CD8-positive, alpha-beta T cell (primary cell): ENCODE measurements at regions of chr10 and their contacts with region 1.

Region 1: DNA sequence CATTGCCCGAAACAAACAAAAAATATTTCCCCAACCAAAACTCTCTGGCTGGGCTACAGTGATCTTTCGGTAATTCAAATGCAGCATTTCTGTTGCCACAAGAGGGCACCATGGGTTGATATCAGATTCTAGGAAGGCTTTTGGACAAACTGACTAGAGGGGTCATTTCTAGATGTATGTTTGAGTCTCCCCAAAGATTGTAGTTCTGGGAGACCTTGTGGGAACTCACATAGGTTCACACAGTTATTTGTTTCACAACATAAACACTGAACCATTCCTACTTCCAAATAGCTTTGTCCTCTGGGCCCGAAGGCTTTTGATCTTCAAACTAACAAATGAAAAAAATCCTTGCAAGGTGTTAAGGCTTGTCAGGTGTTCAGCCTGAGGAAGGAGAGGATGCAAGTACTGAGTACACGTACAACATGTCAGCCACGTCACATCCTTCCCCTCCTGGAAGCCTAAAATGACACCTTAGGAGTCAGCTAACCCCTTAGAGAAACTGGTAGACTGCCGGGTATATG is 37.0 kb upstream of the IL15RA start:
- DNase-seq: peak; percentile 28 to 88 (median 73)
- ATAC-seq: peak; percentile 99
- H3K4me3 ChIP-seq: no peak overlapping the region
- H3K4me3 Mint-ChIP-seq: peak overlapping the region; percentile 17
- H3K27ac ChIP-seq: peak overlapping the region; percentile 23 to 76
- H3K27ac Mint-ChIP-seq: peak overlapping the region; percentile 96
- H3K4me1 ChIP-seq: peaks cover 13% of the 10 kb centered on the region
- H3K4me1 Mint-ChIP-seq: peaks cover 14% of the 10 kb centered on the region
- H3K27me3 ChIP-seq: no peaks in the 10 kb centered on the region
- H3K27me3 Mint-ChIP-seq: no peaks in the 10 kb centered on the region
- CTCF ChIP-seq: peak; percentile 84

Region 2: DNA sequence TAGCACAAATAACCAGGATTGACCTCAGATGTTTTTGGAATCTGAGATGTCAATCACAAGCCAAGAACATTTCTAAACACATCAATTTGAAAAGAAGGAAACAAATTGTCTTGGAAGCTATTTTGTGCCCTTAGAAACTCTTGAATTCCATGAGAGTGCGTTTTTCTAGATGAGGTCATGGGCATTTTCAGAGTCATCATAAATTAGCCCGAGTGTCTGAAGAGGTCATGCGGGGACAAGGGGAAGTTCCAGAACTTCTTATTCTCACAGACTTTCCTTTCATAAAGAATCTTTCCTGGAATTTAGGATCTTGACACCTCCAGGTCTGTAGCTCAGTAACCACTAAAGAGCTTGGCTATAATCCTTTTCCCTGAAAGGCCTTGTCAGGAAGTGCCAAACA is 19.7 kb after region 1 on chr10:
- CTCF ChIA-PET with region 1: interaction called, 12 read pairs
- POLR2A ChIA-PET with region 1: interaction called, 8 read pairs
- intact Hi-C with region 1: no loop called
- DNase-seq: no peak
- ATAC-seq: no peak
- H3K4me3 ChIP-seq: no peak overlapping the region
- H3K4me3 Mint-ChIP-seq: no peak overlapping the region
- H3K27ac ChIP-seq: no peak overlapping the region
- H3K27ac Mint-ChIP-seq: no peak overlapping the region
- H3K4me1 ChIP-seq: peaks cover 26% of the 10 kb centered on the region
- H3K4me1 Mint-ChIP-seq: peaks cover 27% of the 10 kb centered on the region
- H3K27me3 ChIP-seq: no peaks in the 10 kb centered on the region
- H3K27me3 Mint-ChIP-seq: no peaks in the 10 kb centered on the region
- CTCF ChIP-seq: no peak

Region 3: GRCh38 chr10:6050801-6051445 is 36.6 kb after region 1 on chr10:
- CTCF ChIA-PET with region 1: interaction called, 78 read pairs
- POLR2A ChIA-PET with region 1: interaction called, 10 read pairs
- intact Hi-C with region 1: loop called (anchors 1 kb)
- DNase-seq: peak; percentile 68 to 99 (median 86)
- ATAC-seq: peak; percentile 79
- H3K4me3 ChIP-seq: peak overlapping the region; percentile 57 to 69
- H3K4me3 Mint-ChIP-seq: peak overlapping the region; percentile 88
- H3K27ac ChIP-seq: peak overlapping the region; percentile 52 to 79
- H3K27ac Mint-ChIP-seq: peak overlapping the region; percentile 96
- H3K4me1 ChIP-seq: peaks cover 44% of the 10 kb centered on the region
- H3K4me1 Mint-ChIP-seq: peaks cover 75% of the 10 kb centered on the region
- H3K27me3 ChIP-seq: no peaks in the 10 kb centered on the region
- H3K27me3 Mint-ChIP-seq: no peaks in the 10 kb centered on the region
- CTCF ChIP-seq: peak; percentile 18

Region 4: DNA sequence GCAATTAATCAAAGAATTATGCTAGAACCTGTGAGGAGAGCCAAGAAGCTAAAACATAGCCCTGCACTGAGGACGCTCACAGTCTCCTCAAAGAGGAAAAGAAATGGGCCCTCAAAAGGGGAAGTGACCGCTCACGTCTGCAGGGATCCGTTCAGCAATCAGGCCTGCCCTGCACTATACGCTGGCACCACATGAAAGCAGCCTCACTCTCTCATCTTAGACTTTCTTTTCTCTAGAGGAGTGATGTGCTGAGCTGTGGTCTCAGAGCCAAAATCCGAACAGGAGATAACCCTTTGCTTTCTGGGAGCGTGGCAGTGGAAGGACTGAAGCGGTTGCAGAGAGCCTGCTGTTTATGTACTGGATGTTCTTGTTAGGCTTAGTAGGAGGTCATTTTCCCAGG is 54.1 kb after region 1 on chr10:
- CTCF ChIA-PET with region 1: interaction called, 14 read pairs
- POLR2A ChIA-PET with region 1: interaction called, 3 read pairs
- intact Hi-C with region 1: loop called in 1 of 2 experiments (anchors 1 kb)
- DNase-seq: peak in 5 of 9 experiments; percentile 30 to 72 (median 50)
- ATAC-seq: peak; percentile 81
- H3K4me3 ChIP-seq: peak overlapping the region in 1 of 2 experiments; percentile 23
- H3K4me3 Mint-ChIP-seq: peak overlapping the region; percentile 80
- H3K27ac ChIP-seq: no peak overlapping the region
- H3K27ac Mint-ChIP-seq: peak overlapping the region; percentile 81
- H3K4me1 ChIP-seq: peaks cover 49% of the 10 kb centered on the region
- H3K4me1 Mint-ChIP-seq: peaks cover 73% of the 10 kb centered on the region
- H3K27me3 ChIP-seq: no peaks in the 10 kb centered on the region
- H3K27me3 Mint-ChIP-seq: no peaks in the 10 kb centered on the region
- CTCF ChIP-seq: no peak

Region 5: GRCh38 chr10:6409971-6410651 is 395.8 kb after region 1 on chr10:
- CTCF ChIA-PET with region 1: interaction called, 10 read pairs
- POLR2A ChIA-PET with region 1: no interaction called
- intact Hi-C with region 1: loop called in 1 of 2 experiments (anchors 5 kb)
- DNase-seq: peak in 8 of 9 experiments; percentile 15 to 87 (median 56)
- ATAC-seq: peak; percentile 93
- H3K4me3 ChIP-seq: peak overlapping the region in 1 of 2 experiments; percentile 18
- H3K4me3 Mint-ChIP-seq: peak overlapping the region; percentile 43
- H3K27ac ChIP-seq: peak overlapping the region; percentile 42 to 89
- H3K27ac Mint-ChIP-seq: peak overlapping the region; percentile 95
- H3K4me1 ChIP-seq: peaks cover 17% of the 10 kb centered on the region
- H3K4me1 Mint-ChIP-seq: peaks cover 38% of the 10 kb centered on the region
- H3K27me3 ChIP-seq: no peaks in the 10 kb centered on the region
- H3K27me3 Mint-ChIP-seq: no peaks in the 10 kb centered on the region
- CTCF ChIP-seq: no peak